Gastrocnemius medialis (tissue), 4 donors: ENCODE measurements at regions of chr3 and their contacts with region 1.

Region 1: GRCh38 chr3:158845765-158846350 is 44.0 kb downstream of the MFSD1 start:
- DNase-seq: no peak
- ATAC-seq: no peak
- H3K4me3 ChIP-seq: no peak overlapping the region
- H3K27ac ChIP-seq: no peak overlapping the region
- H3K4me1 ChIP-seq: no peaks in the 10 kb centered on the region
- H3K27me3 ChIP-seq: no peaks in the 10 kb centered on the region
- CTCF ChIP-seq: peak; percentile 62 to 77 (median 68)
- POLR2A ChIP-seq: no peak

Region 2: DNA sequence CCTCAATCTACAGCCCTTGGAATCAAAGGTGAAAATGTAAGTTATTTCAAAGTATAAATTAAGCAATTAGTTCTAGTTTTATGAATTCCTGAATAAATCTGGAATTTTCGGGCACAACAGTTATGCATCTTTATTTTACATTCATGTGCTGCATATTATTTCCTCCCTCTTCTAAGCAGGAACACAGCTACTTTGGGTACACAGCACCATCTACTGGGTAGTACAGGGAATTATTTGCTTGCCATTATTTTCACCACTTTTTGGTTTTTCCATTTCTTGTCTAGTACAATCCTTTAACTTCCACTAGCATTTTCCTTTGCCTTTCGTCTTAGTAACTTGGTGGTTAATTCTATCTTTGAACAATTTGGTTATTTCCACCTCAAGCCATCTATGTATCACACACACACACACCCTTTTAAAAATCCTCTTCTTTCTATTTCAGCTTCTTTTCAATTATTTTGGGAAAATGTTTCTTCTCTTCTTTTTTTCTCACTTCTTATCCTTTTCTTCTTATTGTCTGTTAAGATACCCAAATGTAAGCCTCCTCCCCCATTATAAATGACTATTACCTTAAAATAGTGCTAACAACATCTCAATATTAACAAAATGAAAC is 407.0 kb after region 1 on chr3:
- in situ Hi-C with region 1: loop called (anchors 5 to 10 kb)
- intact Hi-C with region 1: no loop called
- DNase-seq: no peak
- ATAC-seq: no peak
- H3K4me3 ChIP-seq: no peak overlapping the region
- H3K27ac ChIP-seq: no peak overlapping the region
- H3K4me1 ChIP-seq: no peaks in the 10 kb centered on the region
- H3K27me3 ChIP-seq: no peaks in the 10 kb centered on the region
- CTCF ChIP-seq: no peak
- POLR2A ChIP-seq: no peak

Region 3: GRCh38 chr3:159260049-159260662 is 414.3 kb after region 1 on chr3:
- in situ Hi-C with region 1: loop called (anchors 5 to 10 kb)
- intact Hi-C with region 1: loop called (anchors 1 kb)
- DNase-seq: no peak
- ATAC-seq: no peak
- H3K4me3 ChIP-seq: no peak overlapping the region
- H3K27ac ChIP-seq: no peak overlapping the region
- H3K4me1 ChIP-seq: no peaks in the 10 kb centered on the region
- H3K27me3 ChIP-seq: no peaks in the 10 kb centered on the region
- CTCF ChIP-seq: peak; percentile 37 to 71 (median 61)
- POLR2A ChIP-seq: no peak